PC-3 (cell line): ENCODE measurements at regions of chr12 and their contacts with region 1.

Region 1: GRCh38 chr12:50132505-50133135 is 20.6 kb downstream of the COX14 start:
- DNase-seq: peak; percentile 69
- ATAC-seq: peak; percentile 61
- H3K4me3 ChIP-seq: no peak overlapping the region
- H3K27ac ChIP-seq: no peak overlapping the region
- H3K4me1 ChIP-seq: no peaks in the 10 kb centered on the region
- H3K27me3 ChIP-seq: no peaks in the 10 kb centered on the region
- CTCF ChIP-seq: peak; percentile 84

Region 2: DNA sequence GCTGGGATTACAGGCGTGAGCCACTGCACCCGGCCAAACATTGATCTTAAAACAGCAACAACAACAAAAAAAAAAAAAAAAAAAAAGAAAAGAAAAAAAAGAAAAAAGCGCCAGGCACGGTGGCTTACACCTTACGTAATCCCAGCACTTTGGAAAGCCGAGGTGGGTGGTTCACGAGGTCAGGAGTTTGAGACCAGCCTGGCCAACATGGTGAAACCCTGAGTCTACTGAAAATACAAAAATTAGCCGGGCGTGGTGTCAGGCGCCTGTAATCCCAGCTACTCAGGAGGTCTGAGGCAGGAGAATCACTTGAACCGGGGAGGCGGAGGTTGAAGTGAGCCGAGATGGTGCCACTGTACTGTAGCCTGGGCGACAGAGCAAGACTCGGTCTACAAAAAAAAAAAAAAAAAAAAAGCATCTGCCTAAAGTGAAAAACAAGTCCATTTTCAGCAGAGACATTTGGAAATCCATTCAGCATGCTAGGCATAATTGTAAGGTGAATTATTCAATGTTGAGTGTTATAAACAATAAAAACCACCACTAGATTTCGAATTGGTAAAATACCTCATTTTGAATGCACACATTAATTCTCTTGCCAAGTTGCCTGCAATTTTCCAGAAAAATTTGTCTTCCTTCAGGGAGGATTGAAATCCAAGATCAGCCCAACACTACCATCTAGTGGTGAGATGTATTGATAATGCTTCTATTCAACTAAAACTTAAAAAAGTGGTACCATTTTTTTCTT is 42.5 kb after region 1 on chr12:
- CTCF ChIA-PET with region 1: interaction called, 4 read pairs
- POLR2A ChIA-PET with region 1: no interaction called
- intact Hi-C with region 1: loop called (anchors 1 kb)
- DNase-seq: peak; percentile 88
- ATAC-seq: peak; percentile 38
- H3K4me3 ChIP-seq: no peak overlapping the region
- H3K27ac ChIP-seq: no peak overlapping the region
- H3K4me1 ChIP-seq: no peaks in the 10 kb centered on the region
- H3K27me3 ChIP-seq: no peaks in the 10 kb centered on the region
- CTCF ChIP-seq: peak; percentile 83